Sigmoid colon (tissue), 7 donors: ENCODE measurements at regions of chr10 and their contacts with region 1.

Region 1: GRCh38 chr10:30783939-30784500 is 154.5 kb upstream of the LYZL2 start:
- DNase-seq: peak; percentile 94
- H3K4me3 ChIP-seq: peak overlapping the region; percentile 47 to 74 (median 61)
- H3K27ac ChIP-seq: peak overlapping the region; percentile 92 to 99 (median 93)
- H3K4me1 ChIP-seq: peaks cover 0 to 47% (median 38%) of the 10 kb centered on the region in 4 donors
- H3K27me3 ChIP-seq: no peaks in the 10 kb centered on the region
- CTCF ChIP-seq: peak; percentile 91 to 94 (median 93)
- EP300 ChIP-seq: no peak
- POLR2A ChIP-seq: no peak

Region 2: GRCh38 chr10:30705101-30705624 is 78.9 kb before region 1 on chr10:
- intact Hi-C with region 1: no loop called
- DNase-seq: no peak
- H3K4me3 ChIP-seq: no peak overlapping the region
- H3K27ac ChIP-seq: no peak overlapping the region
- H3K4me1 ChIP-seq: peaks cover 0 to 15% (median 13%) of the 10 kb centered on the region in 4 donors
- H3K27me3 ChIP-seq: no peaks in the 10 kb centered on the region
- CTCF ChIP-seq: no peak
- EP300 ChIP-seq: no peak
- POLR2A ChIP-seq: no peak

Region 3: GRCh38 chr10:30727524-30727923 is 56.5 kb before region 1 on chr10:
- intact Hi-C with region 1: loop called (anchors 5 kb)
- DNase-seq: no peak
- H3K4me3 ChIP-seq: no peak overlapping the region
- H3K27ac ChIP-seq: peak overlapping the region in 2 of 4 donors; percentile 59 to 65
- H3K4me1 ChIP-seq: peaks cover 0 to 13% (median 5%) of the 10 kb centered on the region in 4 donors
- H3K27me3 ChIP-seq: no peaks in the 10 kb centered on the region
- CTCF ChIP-seq: no peak
- EP300 ChIP-seq: no peak
- POLR2A ChIP-seq: no peak

Region 4: DNA sequence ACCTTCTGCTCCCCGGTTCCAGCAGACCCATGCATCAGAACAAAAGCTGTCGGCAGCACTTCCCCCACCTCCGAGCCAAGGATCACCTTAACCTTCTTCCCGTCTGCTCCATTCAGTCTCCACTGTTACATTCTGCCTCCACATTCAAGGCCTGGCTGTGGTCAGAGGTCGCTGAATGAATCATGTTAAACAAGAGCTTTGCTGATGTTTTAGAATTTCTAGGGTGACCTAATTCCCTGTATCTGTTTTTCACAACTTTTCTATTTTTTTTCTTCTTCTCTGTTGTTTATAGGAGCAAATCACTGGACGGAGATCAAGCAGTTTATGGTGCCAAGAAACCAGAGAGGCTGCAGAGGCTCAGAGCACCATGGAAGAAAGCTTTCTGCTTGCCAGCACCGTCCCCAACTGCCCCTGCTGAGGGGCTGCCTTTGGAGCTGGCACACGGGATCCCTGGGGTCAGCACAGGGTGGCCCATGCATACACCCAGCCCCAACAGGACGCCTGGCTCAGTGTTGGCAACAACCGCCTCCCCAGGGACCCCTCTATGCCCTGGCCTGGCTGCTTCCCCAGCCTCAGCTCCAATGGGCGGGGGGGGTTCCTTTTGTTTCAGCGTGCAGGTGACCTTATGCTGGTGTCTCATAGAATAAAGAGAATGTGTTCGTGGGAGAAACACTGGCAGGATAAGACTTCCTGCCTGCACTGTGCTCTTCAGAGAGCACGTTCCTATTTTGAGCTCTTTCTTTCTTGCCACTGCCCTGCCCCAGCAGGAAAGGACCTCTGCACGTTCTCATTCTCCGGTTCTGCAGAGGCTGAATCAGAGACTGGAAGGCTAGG is 28.2 kb after region 1 on chr10:
- intact Hi-C with region 1: loop called (anchors 2 kb)
- DNase-seq: peak; percentile 89
- H3K4me3 ChIP-seq: peak overlapping the region in 3 of 4 donors; percentile 0 to 29 (median 23)
- H3K27ac ChIP-seq: peak overlapping the region; percentile 70 to 94 (median 80)
- H3K4me1 ChIP-seq: peaks cover 0 to 84% (median 73%) of the 10 kb centered on the region in 4 donors
- H3K27me3 ChIP-seq: no peaks in the 10 kb centered on the region
- CTCF ChIP-seq: no peak
- EP300 ChIP-seq: peak in 2 of 4 donors; percentile 39 to 48
- POLR2A ChIP-seq: no peak

Region 5: DNA sequence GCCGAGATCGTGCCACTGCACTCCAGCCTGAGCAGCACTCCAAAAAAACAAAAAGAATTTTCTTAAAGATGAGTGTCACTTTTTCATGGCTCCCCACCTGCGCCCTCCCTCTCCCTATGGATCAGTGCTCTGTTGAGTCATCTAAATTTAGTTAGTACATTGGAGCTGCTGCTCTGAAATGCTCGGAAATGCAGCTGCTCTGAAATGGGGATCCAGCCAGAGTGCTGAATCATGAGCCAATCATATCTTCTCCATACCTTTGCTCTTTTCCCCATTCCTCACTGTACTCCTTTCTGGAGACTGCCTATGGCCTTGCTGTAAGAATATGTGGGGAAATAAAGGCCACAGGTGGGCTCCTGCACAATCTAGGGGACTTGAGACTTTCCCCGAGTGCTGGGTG is 58.9 kb after region 1 on chr10:
- intact Hi-C with region 1: no loop called
- DNase-seq: no peak
- H3K4me3 ChIP-seq: no peak overlapping the region
- H3K27ac ChIP-seq: peak overlapping the region in 1 of 4 donors; percentile 20
- H3K4me1 ChIP-seq: peaks cover 0 to 41% (median 33%) of the 10 kb centered on the region in 4 donors
- H3K27me3 ChIP-seq: no peaks in the 10 kb centered on the region
- CTCF ChIP-seq: no peak
- EP300 ChIP-seq: no peak
- POLR2A ChIP-seq: no peak

Region 6: GRCh38 chr10:31004611-31005193 is 220.7 kb after region 1 on chr10:
- intact Hi-C with region 1: no loop called
- DNase-seq: no peak
- H3K4me3 ChIP-seq: no peak overlapping the region
- H3K27ac ChIP-seq: peak overlapping the region in 1 of 4 donors; percentile 43
- H3K4me1 ChIP-seq: peaks cover 0 to 41% (median 17%) of the 10 kb centered on the region in 4 donors
- H3K27me3 ChIP-seq: no peaks in the 10 kb centered on the region
- CTCF ChIP-seq: no peak
- EP300 ChIP-seq: no peak
- POLR2A ChIP-seq: no peak

Region 7: GRCh38 chr10:31133628-31134302 is 349.7 kb after region 1 on chr10:
- intact Hi-C with region 1: loop called (anchors 2 kb)
- DNase-seq: peak; percentile 92
- H3K4me3 ChIP-seq: peak overlapping the region; percentile 49 to 56 (median 51)
- H3K27ac ChIP-seq: peak overlapping the region; percentile 85 to 90 (median 87)
- H3K4me1 ChIP-seq: peaks cover 0 to 47% (median 33%) of the 10 kb centered on the region in 4 donors
- H3K27me3 ChIP-seq: no peaks in the 10 kb centered on the region
- CTCF ChIP-seq: no peak
- EP300 ChIP-seq: no peak
- POLR2A ChIP-seq: peak; percentile 60 to 75

Region 8: GRCh38 chr10:31490858-31491504 is 707.0 kb after region 1 on chr10:
- intact Hi-C with region 1: loop called (anchors 5 kb)
- DNase-seq: no peak
- H3K4me3 ChIP-seq: no peak overlapping the region
- H3K27ac ChIP-seq: peak overlapping the region in 2 of 4 donors; percentile 27 to 38
- H3K4me1 ChIP-seq: peaks cover 0 to 19% (median 0%) of the 10 kb centered on the region in 4 donors
- H3K27me3 ChIP-seq: no peaks in the 10 kb centered on the region
- CTCF ChIP-seq: peak in 2 of 4 experiments; percentile 56 to 59
- EP300 ChIP-seq: no peak
- POLR2A ChIP-seq: no peak

Region 9: GRCh38 chr10:31808258-31809218 is 1024.5 kb after region 1 on chr10:
- intact Hi-C with region 1: loop called (anchors 5 kb)
- DNase-seq: peak; percentile 72
- H3K4me3 ChIP-seq: peak overlapping the region; percentile 7 to 37 (median 33)
- H3K27ac ChIP-seq: peak overlapping the region; percentile 50 to 84 (median 79)
- H3K4me1 ChIP-seq: peaks cover 0 to 32% (median 7%) of the 10 kb centered on the region in 4 donors
- H3K27me3 ChIP-seq: no peaks in the 10 kb centered on the region
- CTCF ChIP-seq: peak; percentile 43 to 57 (median 44)
- EP300 ChIP-seq: no peak
- POLR2A ChIP-seq: no peak